Thyroid gland (tissue), 4 donors: ENCODE measurements at regions of chr11 and their contacts with region 1.

Region 1: GRCh38 chr11:116791002-116791812 is 472 bp downstream of the APOA5 start:
- DNase-seq: peak; percentile 79 to 82
- H3K4me3 ChIP-seq: no peak overlapping the region
- H3K27ac ChIP-seq: no peak overlapping the region
- H3K4me1 ChIP-seq: peaks cover 13 to 31% of the 10 kb centered on the region in 2 donors
- H3K27me3 ChIP-seq: no peaks in the 10 kb centered on the region
- CTCF ChIP-seq: peak; percentile 59 to 95 (median 94)
- POLR2A ChIP-seq: no peak

Region 2: GRCh38 chr11:116615211-116615865 is 175.9 kb before region 1 on chr11:
- intact Hi-C with region 1: no loop called
- DNase-seq: no peak
- H3K4me3 ChIP-seq: no peak overlapping the region
- H3K27ac ChIP-seq: no peak overlapping the region
- H3K4me1 ChIP-seq: no peaks in the 10 kb centered on the region
- H3K27me3 ChIP-seq: no peaks in the 10 kb centered on the region
- CTCF ChIP-seq: no peak
- POLR2A ChIP-seq: no peak

Region 3: GRCh38 chr11:116835791-116836631 is 44.8 kb after region 1 on chr11:
- intact Hi-C with region 1: loop called (anchors 5 kb)
- DNase-seq: peak; percentile 99 to 100
- H3K4me3 ChIP-seq: peak overlapping the region in 1 of 3 donors; percentile 6
- H3K27ac ChIP-seq: peak overlapping the region; percentile 96 to 97 (median 96)
- H3K4me1 ChIP-seq: peaks cover 37 to 44% of the 10 kb centered on the region in 2 donors
- H3K27me3 ChIP-seq: no peaks in the 10 kb centered on the region
- CTCF ChIP-seq: peak; percentile 20 to 80 (median 70)
- POLR2A ChIP-seq: peak in 1 of 2 donors; percentile 2

Region 4: GRCh38 chr11:117107701-117108590 is 316.7 kb after region 1 on chr11:
- intact Hi-C with region 1: loop called (anchors 5 kb)
- DNase-seq: no peak
- H3K4me3 ChIP-seq: no peak overlapping the region
- H3K27ac ChIP-seq: no peak overlapping the region
- H3K4me1 ChIP-seq: no peaks in the 10 kb centered on the region
- H3K27me3 ChIP-seq: no peaks in the 10 kb centered on the region
- CTCF ChIP-seq: no peak
- POLR2A ChIP-seq: no peak